A673 (cell line): ENCODE measurements at regions of chr14 and their contacts with region 1.

Region 1: DNA sequence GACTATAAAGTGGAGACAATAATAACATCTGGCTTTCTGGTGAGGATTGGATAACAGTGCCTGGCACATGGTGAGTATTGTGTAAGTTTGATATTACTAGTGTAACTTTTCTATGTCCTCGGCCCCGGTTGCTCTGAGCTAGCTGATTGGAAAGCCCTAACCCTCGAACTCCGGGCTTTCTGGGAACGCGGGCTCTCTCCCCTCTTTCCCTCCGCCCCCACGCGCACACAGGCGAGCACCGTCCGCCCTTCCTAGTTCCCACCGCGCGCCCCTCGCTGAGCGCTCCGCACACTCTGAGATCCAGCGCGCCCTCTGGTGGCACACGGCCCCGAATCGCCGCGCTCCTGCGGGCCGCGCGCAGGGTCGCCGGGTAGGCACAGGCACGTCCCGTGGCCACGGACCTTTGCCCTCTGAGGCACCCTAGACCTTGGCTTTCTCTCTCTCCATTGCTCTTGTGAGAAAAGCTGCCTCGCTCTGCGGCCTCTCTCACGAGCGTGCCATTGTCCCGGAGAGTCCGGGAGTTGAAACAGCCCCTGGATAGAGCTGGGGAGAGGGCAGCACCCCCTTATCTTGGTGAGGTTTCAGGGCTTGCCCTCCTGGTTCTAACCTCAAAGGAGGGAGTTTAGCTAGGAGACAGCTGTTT is 23.2 kb upstream of the ESRRB start:
- DNase-seq: peak; percentile 76
- H3K4me3 ChIP-seq: peak overlapping the region; percentile 1
- H3K27ac ChIP-seq: no peak overlapping the region
- H3K4me1 ChIP-seq: no peaks in the 10 kb centered on the region
- H3K27me3 ChIP-seq: peaks cover 21% of the 10 kb centered on the region
- CTCF ChIP-seq: peak; percentile 96

Region 2: GRCh38 chr14:76050797-76051392 is 301.9 kb before region 1 on chr14:
- CTCF ChIA-PET with region 1: interaction called, 7 read pairs
- POLR2A ChIA-PET with region 1: no interaction called
- intact Hi-C with region 1: loop called (anchors 1 kb)
- DNase-seq: peak; percentile 76
- H3K4me3 ChIP-seq: no peak overlapping the region
- H3K27ac ChIP-seq: no peak overlapping the region
- H3K4me1 ChIP-seq: no peaks in the 10 kb centered on the region
- H3K27me3 ChIP-seq: no peaks in the 10 kb centered on the region
- CTCF ChIP-seq: peak; percentile 82

Region 3: DNA sequence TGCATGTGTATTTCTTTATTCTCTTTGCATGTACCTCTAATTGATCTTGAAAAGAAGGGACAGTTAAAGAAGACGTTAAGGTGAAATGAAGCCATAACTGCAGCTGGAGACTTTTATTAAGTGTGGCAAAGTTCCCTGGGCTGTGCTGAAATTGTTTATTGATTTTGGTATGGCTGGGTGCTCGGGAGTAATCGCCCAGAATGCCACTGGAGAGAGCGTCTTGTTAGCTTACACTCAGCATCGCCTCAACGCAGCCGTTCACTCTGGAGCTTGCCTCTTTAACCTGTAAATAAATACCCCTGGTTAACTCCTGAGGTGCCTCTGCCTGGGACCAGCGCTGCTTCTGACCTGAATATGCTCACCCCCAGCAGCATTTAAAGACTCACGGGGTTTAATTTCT is 102.5 kb before region 1 on chr14:
- CTCF ChIA-PET with region 1: no interaction called
- POLR2A ChIA-PET with region 1: interaction called, 11 read pairs
- intact Hi-C with region 1: no loop called
- DNase-seq: no peak
- H3K4me3 ChIP-seq: no peak overlapping the region
- H3K27ac ChIP-seq: no peak overlapping the region
- H3K4me1 ChIP-seq: no peaks in the 10 kb centered on the region
- H3K27me3 ChIP-seq: peaks cover 27% of the 10 kb centered on the region
- CTCF ChIP-seq: no peak

Region 4: GRCh38 chr14:76267322-76268051 is 85.3 kb before region 1 on chr14:
- CTCF ChIA-PET with region 1: no interaction called
- POLR2A ChIA-PET with region 1: no interaction called
- intact Hi-C with region 1: no loop called
- DNase-seq: peak; percentile 64
- H3K4me3 ChIP-seq: peak overlapping the region; percentile 35
- H3K27ac ChIP-seq: no peak overlapping the region
- H3K4me1 ChIP-seq: no peaks in the 10 kb centered on the region
- H3K27me3 ChIP-seq: peaks cover 49% of the 10 kb centered on the region
- CTCF ChIP-seq: no peak; the same call in 1 of the 2 replicates